Body of pancreas (tissue), 4 donors: ENCODE measurements at regions of chr9 and their contacts with region 1.

Region 1: GRCh38 chr9:112308588-112308987 is 24.8 kb downstream of the PTBP3 start:
- DNase-seq: peak in 3 of 4 donors; percentile 24 to 44 (median 26)
- ATAC-seq: peak; percentile 71
- H3K4me3 ChIP-seq: no peak overlapping the region
- H3K27ac ChIP-seq: no peak overlapping the region
- H3K4me1 ChIP-seq: peaks cover 13% of the 10 kb centered on the region
- H3K27me3 ChIP-seq: no peaks in the 10 kb centered on the region
- CTCF ChIP-seq: no peak
- POLR2A ChIP-seq: no peak

Region 2: DNA sequence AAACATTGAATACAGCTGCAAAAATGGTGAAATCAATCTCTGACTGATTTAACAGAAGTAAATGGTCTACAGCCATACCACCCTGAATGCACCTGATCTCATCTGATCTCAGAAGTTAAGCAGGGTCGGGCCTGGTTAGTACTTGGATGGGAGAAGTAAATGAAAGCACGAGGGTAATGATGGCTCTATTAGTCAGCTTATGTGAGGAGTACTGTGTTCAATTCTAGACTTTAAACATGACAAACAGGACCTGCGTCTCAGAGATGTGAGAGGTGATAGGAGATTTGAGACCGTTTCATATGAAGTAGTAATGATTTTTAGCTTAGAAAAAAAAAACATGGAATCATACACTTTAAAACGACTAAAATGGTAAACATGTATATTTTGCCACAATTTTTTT is 56.4 kb before region 1 on chr9:
- intact Hi-C with region 1: loop called (anchors 10 kb)
- DNase-seq: no peak
- ATAC-seq: no peak
- H3K4me3 ChIP-seq: no peak overlapping the region
- H3K27ac ChIP-seq: no peak overlapping the region
- H3K4me1 ChIP-seq: no peaks in the 10 kb centered on the region
- H3K27me3 ChIP-seq: no peaks in the 10 kb centered on the region
- CTCF ChIP-seq: no peak
- POLR2A ChIP-seq: no peak